ENCODE measurements at regions of chr11 and their contacts with region 1.

Region 1: DNA sequence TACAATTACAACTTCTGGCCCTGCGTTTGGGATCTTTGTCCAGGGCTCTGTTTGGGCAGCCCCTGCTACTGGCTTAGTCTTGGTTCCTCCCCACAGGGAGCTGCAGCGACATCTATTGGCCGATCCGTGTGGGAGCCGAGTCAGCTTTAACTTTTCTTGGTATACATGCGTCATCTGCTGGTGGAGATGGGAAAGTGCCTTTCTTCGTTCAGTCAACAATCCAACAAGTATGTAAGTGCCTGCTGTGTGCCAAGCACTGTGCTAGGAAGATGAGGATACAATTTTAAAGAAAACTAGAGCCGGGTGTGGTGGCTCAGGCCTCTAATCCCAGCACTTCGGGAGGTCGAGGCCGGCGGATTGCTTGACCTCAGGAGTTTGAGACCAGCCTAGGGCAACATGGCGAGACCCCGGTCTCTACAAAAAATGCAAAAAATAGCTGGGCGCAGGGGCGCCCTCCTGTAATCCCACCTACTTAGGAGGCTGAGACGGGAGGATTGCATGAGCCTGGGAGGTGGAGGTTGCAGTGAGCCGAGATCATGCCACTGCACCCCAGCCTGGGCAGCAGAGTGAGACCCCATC is 8.2 kb downstream of the TPBGL start:
- DNase-seq: peak; percentile 91
- H3K4me3 Mint-ChIP-seq: no peak overlapping the region
- H3K27ac Mint-ChIP-seq: no peak overlapping the region
- H3K4me1 Mint-ChIP-seq: peaks cover 3% of the 10 kb centered on the region
- H3K27me3 Mint-ChIP-seq: peaks cover 31% of the 10 kb centered on the region

Region 2: GRCh38 chr11:74702383-74703007 is 546.3 kb before region 1 on chr11:
- CTCF ChIA-PET with region 1: interaction called, 10 read pairs
- POLR2A ChIA-PET with region 1: no interaction called
- DNase-seq: peak; percentile 60
- H3K4me3 Mint-ChIP-seq: no peak overlapping the region
- H3K27ac Mint-ChIP-seq: no peak overlapping the region
- H3K4me1 Mint-ChIP-seq: no peaks in the 10 kb centered on the region
- H3K27me3 Mint-ChIP-seq: peaks cover under 1% of the 10 kb centered on the region

Region 3: GRCh38 chr11:75142714-75143419 is 105.9 kb before region 1 on chr11:
- CTCF ChIA-PET with region 1: interaction called, 145 read pairs
- POLR2A ChIA-PET with region 1: no interaction called
- DNase-seq: peak; percentile 82
- H3K4me3 Mint-ChIP-seq: peak overlapping the region; percentile 33
- H3K27ac Mint-ChIP-seq: peak overlapping the region; percentile 85
- H3K4me1 Mint-ChIP-seq: peaks cover 45% of the 10 kb centered on the region
- H3K27me3 Mint-ChIP-seq: peaks cover 8% of the 10 kb centered on the region

Region 4: GRCh38 chr11:75262961-75263852 is 14.4 kb after region 1 on chr11:
- CTCF ChIA-PET with region 1: interaction called, 16 read pairs
- POLR2A ChIA-PET with region 1: no interaction called
- DNase-seq: no peak
- H3K4me3 Mint-ChIP-seq: no peak overlapping the region
- H3K27ac Mint-ChIP-seq: no peak overlapping the region
- H3K4me1 Mint-ChIP-seq: peaks cover 36% of the 10 kb centered on the region
- H3K27me3 Mint-ChIP-seq: no peaks in the 10 kb centered on the region

Region 5: DNA sequence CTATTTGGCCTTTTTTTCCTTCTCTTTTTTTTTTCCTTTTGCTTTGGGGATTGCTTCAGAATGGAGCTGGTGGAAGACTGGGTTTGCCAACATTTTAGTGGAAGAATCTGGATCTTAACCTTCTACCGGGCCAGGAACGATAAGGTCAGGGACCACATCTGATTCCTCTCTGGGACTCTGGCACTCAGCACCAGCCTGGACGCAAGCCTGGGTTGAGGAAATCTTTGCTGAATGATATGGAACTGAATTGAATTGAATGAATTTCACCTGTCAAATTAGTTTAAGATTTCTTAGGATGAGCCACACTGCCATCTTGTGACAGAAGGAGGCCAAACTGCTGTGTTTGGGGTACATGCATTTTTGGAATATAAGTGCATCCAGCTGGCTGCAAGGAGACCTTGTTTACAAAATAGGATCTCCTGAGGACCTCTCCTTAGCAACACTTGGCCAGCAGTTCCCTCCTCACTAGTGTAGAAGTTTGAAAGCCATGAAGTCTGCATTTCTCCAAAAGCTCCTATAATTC is 22.2 kb after region 1 on chr11:
- CTCF ChIA-PET with region 1: interaction called, 10 read pairs
- POLR2A ChIA-PET with region 1: no interaction called
- DNase-seq: peak; percentile 47
- H3K4me3 Mint-ChIP-seq: no peak overlapping the region
- H3K27ac Mint-ChIP-seq: peak overlapping the region; percentile 63
- H3K4me1 Mint-ChIP-seq: peaks cover 38% of the 10 kb centered on the region
- H3K27me3 Mint-ChIP-seq: no peaks in the 10 kb centered on the region

Region 6: DNA sequence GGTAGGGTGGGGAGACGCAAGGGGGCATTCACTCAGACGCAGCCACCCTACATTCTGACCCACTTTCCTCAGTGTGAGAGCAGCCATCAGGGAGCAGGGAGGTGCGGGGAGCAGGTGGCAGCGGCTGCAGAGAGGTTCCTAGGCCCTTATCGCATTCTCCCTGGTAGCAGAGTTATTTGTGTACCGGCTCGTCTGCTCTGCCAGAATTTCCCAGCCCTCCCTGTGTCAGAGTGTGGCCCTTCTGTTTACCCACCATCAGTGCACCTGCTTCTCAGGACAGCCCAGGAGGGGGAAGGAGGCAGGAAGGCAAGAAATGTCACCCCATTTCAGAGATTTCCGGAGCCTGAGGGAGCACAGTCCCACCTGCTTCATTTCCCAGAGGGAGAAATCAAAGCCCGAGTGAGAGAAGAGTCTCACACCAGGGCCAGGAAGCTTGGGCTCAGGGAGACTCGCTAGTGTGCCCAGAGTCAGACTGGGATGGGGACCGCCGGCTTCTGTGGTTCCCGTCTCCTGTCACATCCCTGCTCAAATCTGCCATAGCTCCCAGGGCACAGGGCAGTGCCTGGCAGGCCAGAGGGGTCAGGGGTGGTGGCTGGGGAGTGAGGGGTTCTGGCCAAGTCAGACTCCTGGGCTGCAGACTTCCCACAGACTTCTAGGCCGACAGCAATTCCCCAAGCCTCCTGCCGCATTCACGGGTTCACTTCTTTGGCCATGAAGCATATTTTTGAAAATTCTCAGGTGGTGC is 53.0 kb after region 1 on chr11:
- CTCF ChIA-PET with region 1: no interaction called
- POLR2A ChIA-PET with region 1: no interaction called
- DNase-seq: no peak
- H3K4me3 Mint-ChIP-seq: no peak overlapping the region
- H3K27ac Mint-ChIP-seq: no peak overlapping the region
- H3K4me1 Mint-ChIP-seq: peaks cover 2% of the 10 kb centered on the region
- H3K27me3 Mint-ChIP-seq: no peaks in the 10 kb centered on the region